Activated CD4-positive, alpha-beta T cell treated with anti-CD3 and anti-CD28 coated beads, Interleukin-2, amount 10 ng/mL, durations not matched to agents 24 days and 14 days (primary cell): ENCODE measurements at regions of chr3 and their contacts with region 1.

Region 1: DNA sequence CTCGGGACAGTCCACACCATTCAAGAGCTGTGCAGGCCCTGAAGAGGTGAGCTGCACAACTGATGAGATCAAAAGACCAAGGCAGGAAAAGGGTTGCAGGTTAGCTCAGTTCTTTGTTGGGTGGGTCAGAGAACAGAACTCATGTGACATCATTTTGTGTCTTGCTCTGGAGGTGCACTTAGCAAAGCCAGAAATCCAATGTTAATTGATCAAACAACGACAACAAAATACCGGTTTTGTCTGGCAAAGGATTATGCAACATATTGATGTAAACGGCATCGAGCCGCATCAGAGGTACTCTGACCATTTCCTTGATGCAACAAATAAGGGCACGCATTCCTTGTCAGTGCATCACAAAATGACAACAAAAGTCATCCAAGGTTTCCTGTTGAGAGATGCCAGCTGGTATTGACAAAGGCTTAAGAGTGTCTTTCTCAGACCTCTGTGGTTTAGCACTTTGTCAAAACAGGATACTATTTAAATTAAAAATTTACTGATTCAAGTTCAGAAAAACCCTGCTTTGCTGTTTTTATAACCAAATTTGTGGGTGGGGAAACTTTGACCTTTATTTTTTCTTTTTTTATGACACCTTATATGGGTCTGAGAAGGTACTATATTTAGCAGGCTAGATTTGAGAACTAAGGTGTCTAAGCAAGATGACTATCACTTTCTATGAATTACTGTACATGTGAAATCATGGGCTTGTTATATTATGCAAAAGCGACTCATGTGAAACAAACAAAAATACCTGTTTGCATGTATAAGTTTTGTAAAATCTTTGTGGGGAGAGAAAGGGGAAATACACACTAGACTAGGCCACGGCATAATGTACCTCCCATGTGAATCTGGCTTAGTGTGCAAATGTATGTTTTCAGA is 496.1 kb downstream of the FOXP1 start:
- DNase-seq: peak; percentile 83
- H3K4me3 Mint-ChIP-seq: peak overlapping the region; percentile 62
- H3K27ac Mint-ChIP-seq: peak overlapping the region; percentile 91
- H3K4me1 Mint-ChIP-seq: peaks cover 70% of the 10 kb centered on the region
- H3K27me3 Mint-ChIP-seq: no peaks in the 10 kb centered on the region

Region 2: GRCh38 chr3:71050538-71051258 is 36.7 kb before region 1 on chr3:
- intact Hi-C with region 1: loop called (anchors 1 kb)
- DNase-seq: peak; percentile 79
- H3K4me3 Mint-ChIP-seq: peak overlapping the region; percentile 46
- H3K27ac Mint-ChIP-seq: peak overlapping the region; percentile 72
- H3K4me1 Mint-ChIP-seq: peaks cover 75% of the 10 kb centered on the region
- H3K27me3 Mint-ChIP-seq: no peaks in the 10 kb centered on the region

Region 3: DNA sequence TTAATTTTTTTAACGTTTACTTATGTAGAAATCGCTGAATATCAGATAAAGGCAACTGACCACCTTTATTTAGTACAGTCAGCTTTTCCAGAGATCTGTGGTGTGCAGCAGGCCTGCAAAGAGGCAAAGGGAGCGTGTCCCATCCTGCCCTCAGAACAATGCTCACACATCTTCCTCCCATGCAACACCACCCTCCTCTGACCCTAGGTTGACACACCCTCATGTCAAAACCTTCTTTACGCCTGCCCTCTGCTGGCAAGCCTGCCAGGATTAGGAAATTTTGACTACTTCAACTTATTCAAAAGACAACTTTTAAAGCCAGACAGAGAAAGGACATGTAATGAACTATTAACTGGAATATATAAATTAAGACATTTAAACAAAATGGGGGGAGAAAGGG is 17.6 kb before region 1 on chr3:
- intact Hi-C with region 1: loop called (anchors 1 kb)
- DNase-seq: peak; percentile 89
- H3K4me3 Mint-ChIP-seq: no peak overlapping the region
- H3K27ac Mint-ChIP-seq: no peak overlapping the region
- H3K4me1 Mint-ChIP-seq: peaks cover 57% of the 10 kb centered on the region
- H3K27me3 Mint-ChIP-seq: no peaks in the 10 kb centered on the region

Region 4: DNA sequence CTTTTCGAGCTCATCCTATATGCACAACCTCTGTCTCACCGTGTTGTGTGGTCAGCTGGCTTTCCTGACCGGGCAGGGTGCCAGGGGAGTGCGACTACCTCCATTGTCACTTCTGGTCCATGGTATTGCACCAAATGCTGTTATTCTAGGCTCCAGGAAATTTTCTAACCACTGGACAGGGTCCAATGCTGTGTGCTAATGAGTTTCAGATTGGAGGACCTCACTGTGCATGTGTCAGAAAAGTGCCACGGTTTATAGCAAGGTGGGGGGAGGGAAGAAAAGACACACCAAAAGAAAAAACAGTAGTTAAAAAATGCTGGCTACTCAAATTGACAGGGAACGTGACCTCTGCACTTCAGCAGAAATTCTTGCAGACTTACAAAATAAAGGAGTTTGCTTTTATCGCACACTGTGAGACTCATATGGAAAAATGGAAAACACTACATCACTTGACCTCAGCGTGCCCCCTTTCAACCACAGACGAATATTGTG is 16.1 kb after region 1 on chr3:
- intact Hi-C with region 1: loop called (anchors 1 kb)
- DNase-seq: no peak
- H3K4me3 Mint-ChIP-seq: no peak overlapping the region
- H3K27ac Mint-ChIP-seq: no peak overlapping the region
- H3K4me1 Mint-ChIP-seq: peaks cover 61% of the 10 kb centered on the region
- H3K27me3 Mint-ChIP-seq: no peaks in the 10 kb centered on the region

Region 5: GRCh38 chr3:71195492-71195891 is 108.1 kb after region 1 on chr3:
- intact Hi-C with region 1: loop called (anchors 5 kb)
- DNase-seq: no peak
- H3K4me3 Mint-ChIP-seq: no peak overlapping the region
- H3K27ac Mint-ChIP-seq: no peak overlapping the region
- H3K4me1 Mint-ChIP-seq: peaks cover 25% of the 10 kb centered on the region
- H3K27me3 Mint-ChIP-seq: no peaks in the 10 kb centered on the region

Region 6: GRCh38 chr3:71360764-71361163 is 273.4 kb after region 1 on chr3:
- intact Hi-C with region 1: loop called (anchors 1 kb)
- DNase-seq: no peak
- H3K4me3 Mint-ChIP-seq: peak overlapping the region; percentile 23
- H3K27ac Mint-ChIP-seq: peak overlapping the region; percentile 89
- H3K4me1 Mint-ChIP-seq: peaks cover 25% of the 10 kb centered on the region
- H3K27me3 Mint-ChIP-seq: peaks cover 19% of the 10 kb centered on the region

Region 7: DNA sequence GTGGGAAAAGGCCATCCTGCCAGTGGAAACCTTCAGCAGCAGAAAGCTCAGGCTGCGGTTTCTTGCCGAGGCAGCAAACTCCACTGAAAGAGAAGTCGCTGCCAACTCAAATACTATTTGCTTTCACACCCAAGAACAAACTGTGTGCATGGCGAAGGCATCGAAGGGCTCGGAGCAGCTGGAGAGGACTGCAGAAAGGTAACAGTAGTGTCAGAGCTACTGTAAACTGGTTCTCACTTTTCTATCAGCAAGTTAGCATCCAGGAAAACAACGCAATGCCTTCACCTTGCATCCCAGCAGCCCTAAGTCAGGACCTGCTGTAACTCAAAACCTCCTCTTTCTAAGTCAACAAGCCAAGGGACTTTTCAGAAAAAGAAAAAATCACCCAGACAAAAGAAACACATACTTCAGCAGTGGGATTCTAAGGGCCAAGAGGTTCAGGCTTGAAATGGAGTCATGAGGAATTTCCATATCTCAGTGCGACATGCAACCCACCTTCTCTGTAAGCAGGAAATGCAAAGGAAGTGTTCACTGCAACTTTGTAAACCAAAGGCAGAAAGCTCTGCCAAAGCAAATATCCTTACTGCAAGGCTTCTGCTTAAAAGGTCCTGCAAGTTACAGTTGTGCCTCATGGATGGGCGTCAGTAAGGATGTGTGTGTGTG is 302.7 kb after region 1 on chr3:
- intact Hi-C with region 1: loop called (anchors 1 kb)
- DNase-seq: peak; percentile 69
- H3K4me3 Mint-ChIP-seq: peak overlapping the region; percentile 46
- H3K27ac Mint-ChIP-seq: peak overlapping the region; percentile 62
- H3K4me1 Mint-ChIP-seq: peaks cover 34% of the 10 kb centered on the region
- H3K27me3 Mint-ChIP-seq: peaks cover 31% of the 10 kb centered on the region